GM12878 (cell line): ENCODE measurements at regions of chr2 and their contacts with region 1.

Region 1: DNA sequence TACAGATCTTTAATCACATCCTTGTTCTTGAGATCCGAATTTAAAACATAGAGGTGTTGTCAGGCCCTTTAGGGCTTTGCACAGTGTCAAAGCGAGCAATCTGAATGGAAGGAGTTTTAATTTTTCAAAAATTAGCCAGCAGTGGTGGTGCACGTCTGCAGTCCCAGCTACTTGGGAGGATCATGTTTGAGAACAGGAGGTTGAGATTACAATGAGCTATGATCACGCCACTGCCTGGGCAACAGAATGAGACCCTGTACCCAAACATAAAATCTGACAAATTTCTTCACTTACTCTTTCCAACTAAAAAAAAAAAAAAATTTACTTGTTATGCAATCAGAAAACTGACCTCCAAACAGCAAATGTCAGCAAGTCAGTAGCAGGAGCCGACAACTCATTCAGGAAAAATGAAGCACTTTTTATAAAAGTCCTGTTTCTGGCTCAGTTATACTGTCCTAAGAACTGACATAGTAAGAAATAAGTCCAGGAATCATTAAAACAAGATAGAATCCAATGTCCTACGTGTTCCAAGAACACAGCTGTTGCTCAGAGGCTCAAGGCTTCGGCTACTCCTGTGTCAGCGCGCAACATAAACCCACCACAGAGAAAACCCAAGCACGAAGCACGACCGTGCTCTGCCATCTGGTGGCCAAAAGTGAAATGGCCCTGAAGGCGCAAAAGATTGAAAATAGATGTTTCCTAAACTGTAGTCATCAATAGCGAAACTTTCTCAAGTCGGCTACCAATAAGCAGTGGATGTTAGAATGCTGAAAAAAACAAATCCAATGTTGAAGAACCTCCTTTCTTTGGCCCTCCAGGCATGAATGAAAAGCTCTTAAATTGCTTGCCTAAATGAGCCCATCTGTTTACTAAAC is 138.1 kb downstream of the INO80D start:
- DNase-seq: no peak
- ATAC-seq: peak; percentile 92
- H3K4me3 ChIP-seq: no peak overlapping the region
- H3K27ac ChIP-seq: no peak overlapping the region
- H3K4me1 ChIP-seq: no peaks in the 10 kb centered on the region
- H3K27me3 ChIP-seq: no peaks in the 10 kb centered on the region; a peak in 2 of 4 replicates
- CTCF ChIP-seq: peak; percentile 84 to 97 (median 89)
- EP300 ChIP-seq: no peak
- POLR2A ChIP-seq: no peak
- RAD21 ChIP-seq: peak; percentile 77

Region 2: GRCh38 chr2:205776139-205776538 is 171.7 kb before region 1 on chr2:
- CTCF ChIA-PET with region 1: interaction called, 24 read pairs
- POLR2A ChIA-PET with region 1: no interaction called
- RAD21 ChIA-PET with region 1: interaction called, 3 read pairs
- SMC1A ChIA-PET with region 1: no interaction called
- in situ Hi-C with region 1: no loop called
- intact Hi-C with region 1: loop called (anchors 2 kb)
- DNase-seq: no peak
- ATAC-seq: peak; percentile 93
- H3K4me3 ChIP-seq: no peak overlapping the region
- H3K27ac ChIP-seq: no peak overlapping the region
- H3K4me1 ChIP-seq: no peaks in the 10 kb centered on the region
- H3K27me3 ChIP-seq: no peaks in the 10 kb centered on the region
- CTCF ChIP-seq: peak; percentile 56 to 68 (median 64)
- EP300 ChIP-seq: no peak
- POLR2A ChIP-seq: no peak
- RAD21 ChIP-seq: peak; percentile 61

Region 3: DNA sequence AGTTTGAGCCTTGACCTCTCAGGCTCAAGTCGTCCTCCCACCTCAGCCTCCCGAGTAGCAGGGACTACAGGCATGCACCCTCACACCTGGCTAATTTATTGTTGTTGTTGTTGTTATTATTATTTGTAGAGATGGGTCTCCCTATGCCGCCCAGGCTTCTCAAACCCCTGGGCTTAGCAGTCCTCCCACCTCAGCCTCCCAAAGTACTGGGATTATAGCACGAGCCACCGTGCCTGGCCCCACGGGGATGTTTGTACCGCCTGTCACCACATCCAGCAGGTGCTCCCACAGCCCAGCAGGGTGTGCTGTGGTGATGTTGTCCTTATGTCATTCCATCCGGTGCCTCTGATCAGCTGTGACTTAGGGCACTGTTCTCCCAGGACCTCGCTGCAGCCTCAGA is 44.2 kb before region 1 on chr2:
- CTCF ChIA-PET with region 1: no interaction called
- POLR2A ChIA-PET with region 1: no interaction called
- RAD21 ChIA-PET with region 1: no interaction called
- SMC1A ChIA-PET with region 1: no interaction called
- in situ Hi-C with region 1: no loop called
- intact Hi-C with region 1: no loop called
- DNase-seq: no peak
- ATAC-seq: peak; percentile 91
- H3K4me3 ChIP-seq: no peak overlapping the region
- H3K27ac ChIP-seq: no peak overlapping the region
- H3K4me1 ChIP-seq: no peaks in the 10 kb centered on the region
- H3K27me3 ChIP-seq: no peaks in the 10 kb centered on the region; a peak in 1 of 4 replicates
- CTCF ChIP-seq: peak in 2 of 3 experiments; percentile 37 to 49; a peak in 4 of 6 replicates
- EP300 ChIP-seq: no peak
- POLR2A ChIP-seq: no peak
- RAD21 ChIP-seq: no peak

Region 4: DNA sequence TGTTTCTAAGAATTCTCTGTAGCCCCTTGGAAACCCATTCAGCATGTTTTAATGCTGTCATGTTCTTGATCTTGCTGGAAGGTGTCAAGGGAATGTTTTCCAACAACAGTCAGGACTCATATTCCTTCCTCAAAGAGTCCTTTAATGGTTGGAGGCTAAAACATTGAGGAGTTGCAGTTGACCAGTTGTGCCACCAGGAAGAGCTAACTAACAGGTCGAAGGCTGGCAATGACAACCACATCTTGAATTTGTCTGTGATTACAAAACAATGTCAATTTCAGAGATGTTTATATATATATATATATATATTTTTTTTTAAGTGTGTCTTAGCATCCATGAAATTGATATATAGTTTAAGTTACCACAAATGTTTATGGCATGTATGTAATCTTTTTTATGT is 13.4 kb before region 1 on chr2:
- CTCF ChIA-PET with region 1: interaction called, 53 read pairs
- POLR2A ChIA-PET with region 1: no interaction called
- RAD21 ChIA-PET with region 1: interaction called, 4 read pairs
- SMC1A ChIA-PET with region 1: interaction called, 4 read pairs
- in situ Hi-C with region 1: no loop called
- intact Hi-C with region 1: no loop called
- DNase-seq: no peak
- ATAC-seq: no peak
- H3K4me3 ChIP-seq: no peak overlapping the region
- H3K27ac ChIP-seq: no peak overlapping the region
- H3K4me1 ChIP-seq: no peaks in the 10 kb centered on the region
- H3K27me3 ChIP-seq: no peaks in the 10 kb centered on the region
- CTCF ChIP-seq: peak in 2 of 3 experiments; percentile 4 to 18; a peak in 2 of 6 replicates
- EP300 ChIP-seq: no peak
- POLR2A ChIP-seq: no peak
- RAD21 ChIP-seq: no peak; the same call in 1 of the 2 replicates

Region 5: GRCh38 chr2:205964111-205964761 is 16.4 kb after region 1 on chr2:
- CTCF ChIA-PET with region 1: interaction called, 22 read pairs
- POLR2A ChIA-PET with region 1: no interaction called
- RAD21 ChIA-PET with region 1: no interaction called
- SMC1A ChIA-PET with region 1: interaction called, 5 read pairs
- in situ Hi-C with region 1: no loop called
- intact Hi-C with region 1: no loop called
- DNase-seq: no peak
- ATAC-seq: peak; percentile 56
- H3K4me3 ChIP-seq: no peak overlapping the region
- H3K27ac ChIP-seq: no peak overlapping the region
- H3K4me1 ChIP-seq: no peaks in the 10 kb centered on the region
- H3K27me3 ChIP-seq: no peaks in the 10 kb centered on the region; a peak in 1 of 4 replicates
- CTCF ChIP-seq: no peak
- EP300 ChIP-seq: no peak
- POLR2A ChIP-seq: no peak
- RAD21 ChIP-seq: no peak